ENCODE measurements at regions of chr9 and their contacts with region 1.

Region 1: DNA sequence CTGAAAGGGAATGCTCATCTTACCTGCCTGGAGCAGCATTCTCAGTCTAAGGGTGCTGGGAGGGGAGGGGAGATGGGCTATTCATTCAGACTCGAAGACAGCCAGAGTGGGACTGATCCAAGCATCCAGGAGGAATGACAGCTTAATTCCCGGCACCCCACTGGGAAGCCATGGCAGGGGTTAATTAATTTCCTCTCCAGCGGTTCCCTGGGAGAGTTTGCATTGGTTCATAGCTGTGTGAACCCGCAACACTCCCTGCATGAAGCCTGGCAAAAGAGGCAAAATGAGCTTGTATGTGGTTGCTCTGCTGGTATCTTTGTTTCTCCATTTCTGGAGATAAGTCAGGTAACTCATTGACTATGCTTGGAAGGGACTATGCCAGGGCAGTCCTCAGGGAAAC is 401.0 kb upstream of the SLC24A2 start:
- DNase-seq: no peak
- H3K4me3 ChIP-seq: no peak overlapping the region
- H3K27ac ChIP-seq: no peak overlapping the region
- H3K4me1 ChIP-seq: no peaks in the 10 kb centered on the region
- H3K27me3 ChIP-seq: no peaks in the 10 kb centered on the region
- CTCF ChIP-seq: no peak
- POLR2A ChIP-seq: no peak

Region 2: DNA sequence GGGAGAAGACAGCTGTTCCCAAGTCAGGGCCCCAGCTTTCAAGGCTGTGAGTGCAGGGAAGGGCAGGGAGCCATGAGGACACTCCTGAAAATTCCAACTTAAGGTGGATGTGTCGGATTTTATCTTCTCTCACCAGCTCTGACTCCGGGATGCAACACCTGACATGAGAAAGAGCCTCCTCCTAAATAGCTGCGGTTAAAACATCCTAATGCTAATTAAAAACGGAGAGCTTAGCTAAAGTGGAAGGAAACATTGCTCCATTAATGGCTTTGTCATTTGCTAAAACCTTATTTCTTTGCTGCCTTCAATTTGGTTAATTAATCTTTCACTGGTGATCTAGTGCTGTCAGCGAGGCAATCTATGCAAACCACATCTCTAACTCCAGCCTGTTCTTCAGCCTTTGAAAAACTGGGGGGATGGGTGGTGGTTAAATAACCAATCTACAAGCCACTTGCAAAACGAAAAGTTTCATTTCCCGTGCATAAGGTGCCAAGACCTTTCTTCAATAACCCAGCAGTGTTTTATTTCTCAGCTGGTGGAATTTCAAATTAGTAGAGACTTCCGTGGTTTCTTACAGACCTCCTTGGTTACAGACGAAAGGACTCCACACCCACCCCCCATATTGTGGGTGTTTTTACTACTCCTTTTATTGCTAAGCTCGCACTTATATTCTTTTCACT is 52.8 kb after region 1 on chr9:
- intact Hi-C with region 1: loop called in 1 of 2 experiments (anchors 10 kb)
- DNase-seq: no peak
- H3K4me3 ChIP-seq: no peak overlapping the region
- H3K27ac ChIP-seq: no peak overlapping the region
- H3K4me1 ChIP-seq: no peaks in the 10 kb centered on the region
- H3K27me3 ChIP-seq: no peaks in the 10 kb centered on the region
- CTCF ChIP-seq: no peak
- POLR2A ChIP-seq: no peak

Region 3: GRCh38 chr9:21481470-21482056 is 1291.7 kb after region 1 on chr9:
- intact Hi-C with region 1: no loop called
- DNase-seq: no peak
- H3K4me3 ChIP-seq: no peak overlapping the region
- H3K27ac ChIP-seq: no peak overlapping the region
- H3K4me1 ChIP-seq: no peaks in the 10 kb centered on the region
- H3K27me3 ChIP-seq: no peaks in the 10 kb centered on the region
- CTCF ChIP-seq: no peak
- POLR2A ChIP-seq: no peak

Measured in adrenal gland (tissue), 19 donors.